Heart left ventricle (tissue), 16 donors: ENCODE measurements at regions of chr12 and their contacts with region 1.

Region 1: DNA sequence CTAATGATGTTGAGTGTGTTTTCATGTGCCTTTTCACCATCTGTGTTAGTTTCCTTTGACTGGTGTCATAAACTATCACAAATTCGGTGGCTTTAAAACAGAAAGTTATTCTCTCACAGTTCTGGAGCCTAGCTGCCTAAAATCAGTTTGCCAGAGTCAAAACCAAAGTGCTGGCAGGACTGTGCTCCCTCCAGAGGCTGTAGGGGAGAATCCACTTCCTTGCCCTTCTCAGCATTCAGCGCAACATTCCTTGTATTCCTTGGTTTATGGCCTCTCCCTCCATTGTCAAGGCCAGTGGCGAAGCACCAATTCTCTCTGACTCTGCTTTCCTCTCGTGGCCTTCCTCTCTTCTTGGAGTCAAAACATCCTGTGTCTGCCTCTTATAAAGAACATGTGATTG is 174.2 kb upstream of the PDE3A start:
- DNase-seq: no peak
- ATAC-seq: peak in 3 of 4 donors; percentile 39 to 68 (median 66)
- H3K4me3 ChIP-seq: no peak overlapping the region
- H3K27ac ChIP-seq: peak overlapping the region in 1 of 12 donors; percentile 4
- H3K4me1 ChIP-seq: peaks cover 0 to 10% (median 0%) of the 10 kb centered on the region in 12 donors
- H3K27me3 ChIP-seq: no peaks in the 10 kb centered on the region
- CTCF ChIP-seq: peak in 10 of 12 donors; percentile 11 to 46 (median 32)
- POLR2A ChIP-seq: no peak

Region 2: GRCh38 chr12:20030826-20031225 is 163.3 kb before region 1 on chr12:
- intact Hi-C with region 1: loop called in 1 of 10 experiments (anchors 10 kb)
- DNase-seq: no peak
- ATAC-seq: no peak
- H3K4me3 ChIP-seq: no peak overlapping the region
- H3K27ac ChIP-seq: no peak overlapping the region
- H3K4me1 ChIP-seq: peaks cover 0 to 6% (median 0%) of the 10 kb centered on the region in 12 donors
- H3K27me3 ChIP-seq: no peaks in the 10 kb centered on the region
- CTCF ChIP-seq: no peak
- POLR2A ChIP-seq: no peak